Aorta (tissue), 5 donors: ENCODE measurements at regions of chr20 and their contacts with region 1.

Region 1: DNA sequence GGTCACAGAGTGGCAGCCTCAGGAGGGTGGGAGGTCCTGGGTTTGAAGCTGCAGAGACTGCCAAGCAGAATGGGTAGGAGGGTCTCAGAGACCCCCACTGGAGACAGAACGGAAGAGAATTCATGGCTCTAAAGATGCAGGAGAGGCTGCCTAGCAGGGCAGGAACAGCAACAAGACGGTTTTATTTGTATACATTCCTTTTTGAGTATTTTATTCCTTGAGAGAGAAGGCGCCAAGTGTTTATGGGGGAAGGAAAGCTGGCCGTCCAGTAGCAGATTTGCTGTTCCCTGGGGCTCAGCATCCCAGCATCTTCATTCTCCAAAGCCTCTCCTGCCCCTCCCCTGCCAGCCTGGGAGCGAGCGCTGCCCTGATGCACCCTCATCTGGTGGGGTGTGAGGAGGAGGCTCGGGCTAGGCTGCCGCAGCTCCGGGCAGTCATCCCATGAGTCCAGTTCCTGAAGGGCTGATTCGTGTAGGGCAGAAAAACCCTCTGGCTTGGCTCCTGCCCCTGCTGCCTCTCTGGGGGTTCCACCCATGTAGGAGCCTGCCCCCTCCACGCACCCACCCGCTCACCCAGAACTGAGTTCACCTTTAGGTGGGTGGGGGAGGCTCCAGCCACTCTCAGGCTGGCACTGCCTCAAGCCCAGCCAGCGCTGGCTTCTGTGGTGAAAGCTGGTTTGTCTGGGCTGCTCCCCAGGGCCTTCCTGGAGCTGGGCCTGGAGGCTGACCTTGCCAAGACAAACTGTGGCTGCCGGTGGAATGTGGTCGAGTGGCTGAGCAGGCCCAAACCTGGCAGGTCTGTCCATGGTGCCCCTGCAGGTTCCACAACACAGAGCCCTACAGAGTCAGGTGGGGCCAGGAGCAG is 32.4 kb downstream of the CPXM1 start:
- DNase-seq: peak; percentile 84 to 90
- ATAC-seq: peak; percentile 89
- H3K4me3 ChIP-seq: no peak overlapping the region
- H3K27ac ChIP-seq: no peak overlapping the region
- H3K4me1 ChIP-seq: no peaks in the 10 kb centered on the region
- H3K27me3 ChIP-seq: no peaks in the 10 kb centered on the region

Region 2: GRCh38 chr20:2838170-2838797 is 70.3 kb after region 1 on chr20:
- intact Hi-C with region 1: loop called in 1 of 2 experiments (anchors 5 kb)
- DNase-seq: no peak
- ATAC-seq: no peak
- H3K4me3 ChIP-seq: no peak overlapping the region
- H3K27ac ChIP-seq: no peak overlapping the region
- H3K4me1 ChIP-seq: no peaks in the 10 kb centered on the region
- H3K27me3 ChIP-seq: no peaks in the 10 kb centered on the region

Region 3: GRCh38 chr20:2972126-2972525 is 204.1 kb after region 1 on chr20:
- intact Hi-C with region 1: no loop called
- DNase-seq: no peak
- ATAC-seq: no peak
- H3K4me3 ChIP-seq: no peak overlapping the region
- H3K27ac ChIP-seq: no peak overlapping the region
- H3K4me1 ChIP-seq: no peaks in the 10 kb centered on the region
- H3K27me3 ChIP-seq: no peaks in the 10 kb centered on the region